ENCODE measurements at regions of chr10 and their contacts with region 1.

Region 1: GRCh38 chr10:91389636-91390512 is 20.3 kb upstream of the HECTD2 start:
- DNase-seq: no peak
- ATAC-seq: peak; percentile 87

Region 2: GRCh38 chr10:91298224-91298871 is 91.5 kb before region 1 on chr10:
- intact Hi-C with region 1: loop called (anchors 10 kb)
- DNase-seq: peak; percentile 79
- ATAC-seq: peak; percentile 91

Region 3: DNA sequence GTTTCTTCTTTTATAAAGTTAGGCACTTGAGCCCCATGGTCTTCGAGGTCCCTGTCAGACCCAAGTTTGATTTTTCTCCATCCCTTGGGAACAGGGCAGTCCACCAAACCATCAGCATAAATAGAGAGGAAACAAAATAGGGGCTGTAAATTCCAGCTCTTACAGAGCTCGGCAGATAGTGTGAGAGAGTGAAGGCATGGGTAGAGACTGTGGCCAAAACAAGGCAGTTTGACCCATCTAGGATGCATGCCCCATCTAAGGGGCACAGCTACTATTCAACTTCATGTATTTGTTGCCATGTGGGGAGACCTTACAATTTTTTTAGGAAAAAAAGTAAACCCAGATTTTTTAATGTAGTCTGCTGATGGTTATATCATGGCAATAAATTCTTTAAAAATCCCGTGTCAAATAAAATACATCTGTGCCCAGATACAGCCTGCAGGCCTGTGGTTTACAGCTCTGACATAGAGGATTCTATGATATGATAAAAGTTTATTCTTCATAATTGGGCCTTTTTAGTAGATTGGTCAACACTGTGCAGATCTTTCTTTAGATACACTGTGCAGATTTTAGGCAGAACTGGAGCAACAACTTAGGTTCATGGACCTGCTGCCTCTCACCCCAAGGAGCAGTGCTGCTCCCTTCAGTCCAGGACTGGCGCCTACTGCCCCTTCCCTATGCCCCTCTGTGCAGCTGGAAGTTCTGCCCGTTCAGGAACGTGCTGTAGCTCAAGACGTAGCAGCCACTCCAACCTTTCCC is 237.6 kb after region 1 on chr10:
- intact Hi-C with region 1: loop called (anchors 10 kb)
- DNase-seq: no peak
- ATAC-seq: no peak

Measured in Right ventricle myocardium superior (tissue), 1 donor.